ENCODE measurements at regions of chr20 and their contacts with region 1.

Region 1: GRCh38 chr20:44720617-44720993 is 5.4 kb downstream of the CCN5 start:
- H3K4me3 ChIP-seq: no peak overlapping the region
- H3K27ac ChIP-seq: no peak overlapping the region
- H3K4me1 ChIP-seq: peaks cover 6% of the 10 kb centered on the region
- CTCF ChIP-seq: no peak

Region 2: DNA sequence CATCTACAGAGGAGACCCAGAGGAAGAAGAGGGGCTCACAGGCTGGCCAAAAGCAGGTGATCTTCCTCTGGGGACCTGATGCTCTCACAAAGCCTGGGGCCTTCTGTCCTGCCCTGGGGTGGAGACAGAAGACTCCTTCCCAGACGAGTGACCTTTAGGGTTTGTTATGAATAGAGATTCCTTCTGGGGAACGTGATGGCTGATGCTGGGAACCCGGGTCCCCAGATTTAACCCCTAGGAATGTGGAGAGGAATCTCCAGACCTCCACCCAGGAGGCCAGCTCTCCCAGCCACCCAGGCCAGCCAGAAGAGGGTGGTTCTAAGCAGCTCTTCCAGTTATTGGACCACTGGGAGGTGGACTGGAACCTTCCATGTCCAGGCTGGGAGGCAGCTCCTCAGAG is 22.3 kb before region 1 on chr20:
- CTCF ChIA-PET with region 1: interaction called, 11 read pairs
- POLR2A ChIA-PET with region 1: no interaction called
- H3K4me3 ChIP-seq: no peak overlapping the region
- H3K27ac ChIP-seq: no peak overlapping the region
- H3K4me1 ChIP-seq: no peaks in the 10 kb centered on the region
- CTCF ChIP-seq: no peak